Posterior cingulate gyrus (tissue), 11 donors: ENCODE measurements at regions of chr12 and their contacts with region 1.

Region 1: GRCh38 chr12:56189176-56189917 is at the start of gene SMARCC2:
- DNase-seq: peak; percentile 58 to 96 (median 78)

Region 2: DNA sequence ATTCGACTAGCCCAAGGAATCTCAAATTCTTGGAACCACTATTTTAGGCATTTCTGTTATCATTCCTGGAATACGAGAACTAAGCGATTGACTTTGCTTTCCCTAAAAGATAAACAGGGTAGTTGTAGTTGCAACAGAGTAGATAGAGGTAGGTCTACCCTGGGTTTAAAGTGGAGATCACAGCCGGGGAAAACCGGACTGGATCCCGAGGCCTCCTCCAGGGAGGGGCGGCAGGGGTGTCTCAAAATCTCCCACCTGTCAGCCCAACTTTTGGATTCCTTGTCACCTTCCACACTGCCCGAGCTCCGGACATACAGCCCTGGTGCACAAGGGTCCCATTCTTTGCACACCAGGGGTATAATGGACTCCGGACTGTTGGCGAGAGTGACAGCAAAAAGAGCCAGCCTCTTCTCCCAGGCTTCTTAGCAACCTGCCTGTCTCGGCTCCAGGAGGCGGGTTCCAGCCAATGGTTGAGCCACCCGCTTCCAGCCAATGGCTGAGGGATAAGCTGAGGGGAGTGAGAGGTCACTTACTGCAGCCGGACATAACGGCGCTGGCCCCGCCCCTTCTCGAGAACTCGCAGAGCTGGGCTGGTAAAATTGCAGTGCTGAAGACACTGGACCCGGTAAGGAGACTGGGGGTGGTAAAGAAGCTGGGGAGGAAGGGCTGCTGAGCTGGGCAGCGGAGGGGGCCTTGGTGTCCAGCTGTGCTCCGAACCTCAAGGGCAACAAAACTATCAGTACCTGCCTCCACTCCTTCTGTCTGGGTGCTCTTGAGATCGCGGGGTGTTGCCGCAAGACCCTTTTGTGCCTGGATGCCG is 192.4 kb before region 1 on chr12 and contains the start of gene SUOX:
- intact Hi-C with region 1: no loop called
- DNase-seq: peak; percentile 94 to 100 (median 98)

Region 3: DNA sequence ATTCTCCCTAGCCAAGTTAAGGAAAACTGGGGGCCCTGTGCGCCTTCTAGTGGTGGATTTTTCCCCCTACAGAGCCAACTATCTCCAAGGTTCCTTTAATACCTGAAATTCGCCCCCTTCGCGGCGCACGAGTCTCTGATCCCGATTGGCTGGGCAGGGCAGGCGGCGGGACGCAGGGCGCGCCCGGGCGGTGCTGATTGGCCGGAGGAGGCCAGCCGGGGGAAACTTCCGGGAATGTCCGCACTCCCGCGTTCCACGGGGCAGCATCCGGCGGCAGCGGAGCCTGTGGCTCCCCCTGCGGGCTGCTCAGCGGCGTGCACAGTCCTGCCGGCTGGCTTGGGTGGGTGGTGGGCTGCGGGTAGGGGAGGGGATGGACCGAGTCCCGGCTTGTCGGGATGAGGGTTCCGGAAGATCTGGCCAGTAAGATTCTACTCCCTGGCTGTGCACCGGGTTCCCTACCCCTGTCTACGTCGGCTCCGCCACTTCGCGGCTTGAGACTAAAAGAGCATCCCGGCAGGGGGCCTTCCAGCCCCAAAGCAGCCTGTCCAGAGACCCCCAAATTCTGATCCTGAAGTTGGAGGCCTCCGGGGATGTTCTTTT is 34.9 kb after region 1 on chr12 and contains the start of gene NABP2:
- intact Hi-C with region 1: loop called (anchors 2 kb)
- DNase-seq: peak; percentile 95 to 100 (median 98)

Region 4: GRCh38 chr12:56258057-56258819 is 68.9 kb after region 1 on chr12 and contains the start of gene ANKRD52:
- intact Hi-C with region 1: loop called (anchors 2 kb)
- DNase-seq: peak; percentile 53 to 96 (median 70)

Region 5: DNA sequence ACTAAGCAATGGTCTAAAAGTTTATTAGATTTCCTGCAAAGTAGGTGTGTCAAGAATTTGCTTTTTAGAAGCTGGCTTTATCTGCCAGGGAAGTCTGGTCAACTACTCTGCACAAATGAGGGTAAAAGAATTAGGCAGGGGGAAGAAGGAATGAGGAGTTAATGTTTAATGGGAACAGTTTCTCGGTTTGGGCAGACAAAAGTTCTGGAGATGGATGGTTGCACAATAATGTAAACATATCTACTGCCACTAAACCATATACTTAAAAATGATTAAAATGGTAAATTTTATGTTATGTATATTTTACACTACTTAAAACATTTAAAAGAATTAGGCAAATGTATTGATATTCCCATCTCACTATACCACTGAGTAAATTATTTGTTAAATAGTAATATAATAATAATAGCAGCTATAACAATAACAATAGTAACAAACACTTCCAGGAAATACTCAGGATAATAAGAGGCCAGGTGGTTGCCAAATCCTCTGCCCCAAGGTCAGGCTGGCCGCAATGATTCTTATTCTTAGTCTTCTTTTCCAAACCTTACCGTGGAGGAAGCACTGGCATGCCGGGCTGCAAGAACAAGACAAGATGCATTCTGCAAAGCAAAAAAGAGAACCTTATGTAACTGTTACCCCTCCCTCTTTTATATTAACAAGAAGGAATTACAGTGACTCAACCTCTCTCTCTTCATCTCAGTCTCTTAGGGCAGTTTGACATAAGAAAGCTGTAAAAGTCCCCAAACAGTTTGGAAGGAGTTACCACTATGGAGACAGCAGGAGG is 96.9 kb after region 1 on chr12:
- intact Hi-C with region 1: no loop called
- DNase-seq: no peak

Region 6: GRCh38 chr12:56333679-56334489 is 144.5 kb after region 1 on chr12 and contains the start of gene PAN2:
- intact Hi-C with region 1: no loop called
- DNase-seq: peak; percentile 90 to 99 (median 94)

Region 7: GRCh38 chr12:56461235-56462159 is 272.1 kb after region 1 on chr12:
- intact Hi-C with region 1: loop called (anchors 5 kb)
- DNase-seq: peak in 2 of 10 donors; percentile 16 to 25

Region 8: DNA sequence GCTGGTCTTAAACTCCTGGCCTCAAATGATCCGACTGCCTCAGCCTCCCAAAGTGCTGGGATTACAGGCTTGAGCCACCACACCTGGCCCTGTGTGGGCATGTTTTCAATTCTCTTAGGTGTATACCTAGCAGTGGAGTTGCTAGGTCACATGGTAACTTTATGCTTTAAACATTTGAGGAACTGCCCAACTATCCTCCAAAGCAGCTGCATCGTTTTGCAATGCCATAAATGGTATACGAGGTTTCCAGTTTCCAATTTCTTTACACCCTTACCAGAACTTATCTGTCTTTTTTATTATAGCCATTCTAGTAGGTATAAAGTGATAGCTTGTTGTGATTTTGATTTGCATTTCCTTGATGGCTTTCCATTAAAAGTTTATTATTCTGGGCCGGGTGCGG is 357.3 kb after region 1 on chr12:
- intact Hi-C with region 1: no loop called
- DNase-seq: no peak